A673 (cell line): ENCODE measurements at regions of chr11 and their contacts with region 1.

Region 1: GRCh38 chr11:69101115-69101791 is 52.5 kb downstream of the TPCN2 start:
- DNase-seq: peak; percentile 98
- H3K4me3 ChIP-seq: no peak overlapping the region
- H3K27ac ChIP-seq: peak overlapping the region; percentile 72
- H3K4me1 ChIP-seq: peaks cover 28% of the 10 kb centered on the region
- H3K27me3 ChIP-seq: no peaks in the 10 kb centered on the region
- CTCF ChIP-seq: peak; percentile 100

Region 2: GRCh38 chr11:69209421-69210309 is 108.4 kb after region 1 on chr11:
- CTCF ChIA-PET with region 1: interaction called, 4 read pairs
- POLR2A ChIA-PET with region 1: interaction called, 3 read pairs
- intact Hi-C with region 1: loop called (anchors 2 kb)
- DNase-seq: no peak
- H3K4me3 ChIP-seq: no peak overlapping the region
- H3K27ac ChIP-seq: peak overlapping the region; percentile 22
- H3K4me1 ChIP-seq: peaks cover 27% of the 10 kb centered on the region
- H3K27me3 ChIP-seq: no peaks in the 10 kb centered on the region
- CTCF ChIP-seq: no peak

Region 3: DNA sequence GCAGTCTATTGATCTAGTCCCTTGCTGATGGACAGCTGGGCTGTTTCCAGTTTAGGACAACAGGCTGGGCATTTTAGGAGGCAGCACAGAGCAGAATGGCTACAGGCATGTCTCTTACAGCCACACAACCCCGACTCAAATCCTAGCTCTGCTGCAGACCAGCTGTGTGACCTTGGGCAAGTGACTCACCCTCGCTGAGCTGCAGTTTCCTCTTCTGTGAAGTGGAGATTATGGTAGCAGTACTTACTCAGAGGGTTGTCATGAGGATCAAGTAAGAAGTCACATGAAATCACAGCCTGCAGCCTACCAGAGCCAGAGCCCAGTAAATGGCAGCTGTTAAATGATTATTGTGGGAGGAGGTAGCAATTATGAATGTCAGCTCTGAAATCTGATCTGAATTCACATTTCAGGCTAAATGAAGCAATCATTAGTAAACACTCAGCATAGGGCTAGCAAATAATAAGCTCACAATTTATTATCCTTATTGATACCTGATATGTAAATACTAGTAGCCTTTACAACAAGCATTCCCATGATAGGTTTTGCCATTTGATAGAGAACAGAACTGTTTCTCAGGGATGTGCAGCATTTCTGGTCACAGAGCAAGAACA is 251.6 kb after region 1 on chr11:
- CTCF ChIA-PET with region 1: no interaction called
- POLR2A ChIA-PET with region 1: no interaction called
- intact Hi-C with region 1: loop called (anchors 10 kb)
- DNase-seq: peak; percentile 84
- H3K4me3 ChIP-seq: no peak overlapping the region
- H3K27ac ChIP-seq: peak overlapping the region; percentile 69
- H3K4me1 ChIP-seq: peaks cover 68% of the 10 kb centered on the region
- H3K27me3 ChIP-seq: no peaks in the 10 kb centered on the region
- CTCF ChIP-seq: no peak

Region 4: GRCh38 chr11:69620683-69621290 is 519.5 kb after region 1 on chr11:
- CTCF ChIA-PET with region 1: interaction called, 17 read pairs
- POLR2A ChIA-PET with region 1: interaction called, 5 read pairs
- intact Hi-C with region 1: loop called (anchors 1 kb)
- DNase-seq: peak; percentile 91
- H3K4me3 ChIP-seq: no peak overlapping the region
- H3K27ac ChIP-seq: peak overlapping the region; percentile 98
- H3K4me1 ChIP-seq: peaks cover 65% of the 10 kb centered on the region
- H3K27me3 ChIP-seq: no peaks in the 10 kb centered on the region
- CTCF ChIP-seq: no peak

Region 5: DNA sequence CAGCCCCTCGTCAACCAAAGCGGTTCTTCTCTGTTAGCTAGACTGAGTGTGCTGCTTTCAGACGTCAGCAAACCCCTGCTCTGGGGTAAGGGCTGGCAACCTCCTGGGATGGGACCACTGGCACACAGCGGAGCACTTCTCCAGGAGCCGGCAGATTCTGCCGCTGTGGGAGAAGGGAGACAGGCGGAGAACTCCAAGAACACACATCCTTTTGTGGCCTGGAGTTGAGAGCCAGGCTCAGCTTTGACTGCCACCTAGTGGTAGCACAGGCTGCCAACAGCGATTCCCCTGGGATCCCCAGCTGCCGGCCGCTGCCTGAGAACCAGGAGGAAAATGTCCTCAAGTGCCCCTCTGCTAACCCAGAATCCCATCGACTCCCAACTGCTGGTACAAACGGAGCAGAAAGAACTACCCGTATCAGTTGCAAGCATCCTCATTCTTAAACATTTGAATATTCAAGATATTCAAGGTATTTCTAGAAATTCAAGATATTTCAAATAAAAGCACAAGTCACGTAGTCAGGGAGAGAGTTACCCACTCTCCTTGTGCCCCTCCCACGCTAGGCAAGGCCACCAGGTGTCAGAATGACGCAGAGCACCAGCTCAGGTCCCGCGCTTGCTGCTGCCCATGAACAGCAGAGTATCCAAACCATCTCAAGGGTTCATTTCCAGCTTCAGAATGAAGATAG is 569.0 kb after region 1 on chr11:
- CTCF ChIA-PET with region 1: interaction called, 27 read pairs
- POLR2A ChIA-PET with region 1: no interaction called
- intact Hi-C with region 1: loop called (anchors 2 kb)
- DNase-seq: peak; percentile 96
- H3K4me3 ChIP-seq: no peak overlapping the region
- H3K27ac ChIP-seq: peak overlapping the region; percentile 69
- H3K4me1 ChIP-seq: peaks cover 50% of the 10 kb centered on the region
- H3K27me3 ChIP-seq: no peaks in the 10 kb centered on the region
- CTCF ChIP-seq: peak; percentile 99